ENCODE measurements at regions of chr11 and their contacts with region 1.

Region 1: GRCh38 chr11:48172818-48173609 is 43.6 kb upstream of the OR4B1 start:
- DNase-seq: peak; percentile 58
- ATAC-seq: peak; percentile 92
- H3K4me3 ChIP-seq: no peak overlapping the region
- H3K27ac ChIP-seq: no peak overlapping the region
- H3K4me1 ChIP-seq: no peaks in the 10 kb centered on the region
- H3K27me3 ChIP-seq: no peaks in the 10 kb centered on the region
- CTCF ChIP-seq: peak; percentile 97

Region 2: DNA sequence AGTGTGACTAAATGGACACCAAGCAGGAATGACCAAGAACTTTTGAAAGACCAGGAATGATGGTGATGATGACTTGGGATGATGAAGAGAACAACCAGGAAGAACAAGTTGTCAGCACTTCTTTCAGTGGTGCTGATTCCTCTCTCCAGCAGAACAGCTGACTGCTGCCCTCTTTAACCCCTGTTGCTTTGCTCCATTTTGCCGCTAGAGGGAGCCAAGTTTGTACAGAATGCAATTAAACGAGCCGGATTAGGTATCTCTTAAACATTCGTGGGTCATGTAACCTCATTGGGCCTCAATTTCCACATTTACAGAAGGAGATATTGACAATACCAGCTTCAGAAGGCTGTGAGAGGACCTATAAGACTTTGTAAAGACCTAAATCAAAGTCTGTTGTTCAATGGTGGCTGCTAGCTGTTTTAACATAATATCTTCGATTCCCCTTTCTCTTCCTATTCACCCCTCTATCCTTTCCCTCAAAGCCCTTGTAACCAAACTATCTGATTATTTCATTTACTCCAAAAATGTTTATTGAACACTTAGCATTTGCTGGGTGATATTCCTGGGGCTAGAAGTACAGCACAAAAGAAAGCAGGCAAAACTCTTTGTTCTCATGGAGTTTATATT is 134.9 kb after region 1 on chr11:
- CTCF ChIA-PET with region 1: no interaction called
- POLR2A ChIA-PET with region 1: no interaction called
- in situ Hi-C with region 1: no loop called
- intact Hi-C with region 1: loop called (anchors 10 kb)
- DNase-seq: peak; percentile 69
- ATAC-seq: peak; percentile 84
- H3K4me3 ChIP-seq: no peak overlapping the region
- H3K27ac ChIP-seq: no peak overlapping the region
- H3K4me1 ChIP-seq: no peaks in the 10 kb centered on the region
- H3K27me3 ChIP-seq: no peaks in the 10 kb centered on the region
- CTCF ChIP-seq: peak; percentile 90

Region 3: GRCh38 chr11:49302360-49302759 is 1129.3 kb after region 1 on chr11:
- CTCF ChIA-PET with region 1: interaction called, 10 read pairs
- POLR2A ChIA-PET with region 1: no interaction called
- in situ Hi-C with region 1: no loop called
- intact Hi-C with region 1: no loop called
- DNase-seq: no peak
- ATAC-seq: no peak
- H3K4me3 ChIP-seq: no peak overlapping the region
- H3K27ac ChIP-seq: no peak overlapping the region
- H3K4me1 ChIP-seq: no peaks in the 10 kb centered on the region
- H3K27me3 ChIP-seq: no peaks in the 10 kb centered on the region
- CTCF ChIP-seq: no peak